Activated naive CD4-positive, alpha-beta T cell treated with anti-CD3 and anti-CD28 coated beads, Interleukin-2, amount 10 ng/mL, durations not matched to agents 7 days and 5 days (primary cell): ENCODE measurements at regions of chr4 and their contacts with region 1.

Region 1: GRCh38 chr4:10164877-10165283 is 48.3 kb upstream of the WDR1 start:
- DNase-seq: peak; percentile 35
- H3K4me3 Mint-ChIP-seq: no peak overlapping the region
- H3K27ac Mint-ChIP-seq: no peak overlapping the region
- H3K4me1 Mint-ChIP-seq: peaks cover 38% of the 10 kb centered on the region
- H3K27me3 Mint-ChIP-seq: peaks cover 8% of the 10 kb centered on the region

Region 2: DNA sequence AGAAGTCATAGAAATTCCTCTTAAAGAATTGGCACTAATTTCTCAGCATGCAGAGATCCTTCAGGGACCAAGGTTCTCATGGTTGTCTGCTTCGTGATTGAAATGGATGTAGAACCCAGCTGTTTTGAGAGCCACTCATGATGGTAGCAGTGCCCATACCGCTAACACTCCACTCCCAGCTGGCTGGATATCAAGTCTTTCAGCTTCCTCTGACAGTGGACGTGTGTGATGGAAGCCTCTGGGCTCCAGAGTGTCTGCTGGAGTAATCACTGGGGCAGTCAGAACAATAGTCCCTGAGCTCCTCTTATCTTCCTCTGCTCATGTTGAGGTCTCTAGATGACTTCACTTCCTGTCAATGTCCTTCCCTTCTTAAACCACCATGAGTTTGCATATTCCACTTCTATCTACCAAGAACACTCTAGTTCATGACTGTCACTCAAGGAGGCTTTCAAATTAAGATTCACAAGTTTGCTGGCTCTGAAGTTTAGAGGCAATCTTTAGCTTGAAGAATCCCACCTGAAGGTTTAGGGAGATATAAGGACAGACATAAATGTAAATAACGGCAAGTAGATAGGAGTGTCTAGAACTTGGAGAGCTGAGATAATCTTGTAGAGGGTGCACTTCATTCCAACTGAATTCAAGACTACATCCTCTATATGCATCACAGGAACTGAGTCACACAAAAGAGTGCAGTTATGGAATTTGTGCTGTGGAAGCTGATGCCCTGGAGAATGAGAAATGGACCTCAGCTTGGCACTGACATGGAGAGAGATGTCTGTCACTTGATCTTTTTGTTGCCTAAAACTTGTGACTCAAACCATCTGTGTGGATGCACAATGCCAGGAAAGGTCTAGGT is 16.3 kb after region 1 on chr4:
- CTCF ChIA-PET with region 1: interaction called, 32 read pairs
- DNase-seq: peak; percentile 46
- H3K4me3 Mint-ChIP-seq: no peak overlapping the region
- H3K27ac Mint-ChIP-seq: peak overlapping the region; percentile 87
- H3K4me1 Mint-ChIP-seq: peaks cover 47% of the 10 kb centered on the region
- H3K27me3 Mint-ChIP-seq: peaks cover 7% of the 10 kb centered on the region

Region 3: DNA sequence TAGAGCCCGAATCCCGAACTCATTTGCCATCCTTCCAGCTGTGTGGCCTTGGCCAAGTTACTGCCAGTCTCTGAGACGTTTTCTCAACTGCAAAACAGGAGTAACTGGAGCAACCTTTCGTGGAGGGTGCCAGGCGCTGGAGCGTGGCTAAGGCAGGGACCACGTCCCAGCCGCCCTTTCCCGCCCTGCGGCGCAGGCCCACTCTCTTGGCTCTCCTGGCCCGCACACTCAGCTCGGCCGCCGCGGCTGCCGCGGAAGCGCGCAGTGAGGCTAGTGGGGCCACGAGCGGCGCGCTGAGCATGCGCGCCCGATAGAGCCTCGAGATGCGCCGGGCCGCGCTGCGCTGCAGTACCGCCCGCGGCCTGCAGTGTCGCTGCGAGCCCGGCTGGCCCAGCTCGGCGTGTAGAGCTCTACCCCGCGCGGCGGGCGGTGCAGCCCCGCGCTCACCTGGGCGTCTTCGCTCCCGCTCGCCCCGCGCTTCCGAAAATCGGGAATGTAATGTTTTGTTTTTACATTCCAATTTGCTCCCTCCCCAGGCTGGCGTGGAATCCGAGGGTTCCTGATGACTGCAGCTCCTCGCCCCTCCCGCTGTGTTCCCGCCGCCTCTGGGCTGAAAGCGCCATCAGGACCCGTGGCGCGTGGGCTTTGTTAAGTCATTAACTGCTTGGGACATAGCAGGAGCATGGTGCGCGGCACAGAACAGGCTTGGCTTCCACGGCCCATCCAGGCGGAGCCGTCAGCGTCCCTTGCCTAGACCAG is 296.4 kb after region 1 on chr4:
- CTCF ChIA-PET with region 1: interaction called, 13 read pairs
- DNase-seq: peak; percentile 76
- H3K4me3 Mint-ChIP-seq: peak overlapping the region; percentile 65
- H3K27ac Mint-ChIP-seq: no peak overlapping the region
- H3K4me1 Mint-ChIP-seq: peaks cover 32% of the 10 kb centered on the region
- H3K27me3 Mint-ChIP-seq: peaks cover 50% of the 10 kb centered on the region

Region 4: GRCh38 chr4:10535912-10536311 is 371.0 kb after region 1 on chr4:
- CTCF ChIA-PET with region 1: interaction called, 81 read pairs
- DNase-seq: no peak
- H3K4me3 Mint-ChIP-seq: no peak overlapping the region
- H3K27ac Mint-ChIP-seq: no peak overlapping the region
- H3K4me1 Mint-ChIP-seq: no peaks in the 10 kb centered on the region
- H3K27me3 Mint-ChIP-seq: peaks cover 12% of the 10 kb centered on the region

Region 5: DNA sequence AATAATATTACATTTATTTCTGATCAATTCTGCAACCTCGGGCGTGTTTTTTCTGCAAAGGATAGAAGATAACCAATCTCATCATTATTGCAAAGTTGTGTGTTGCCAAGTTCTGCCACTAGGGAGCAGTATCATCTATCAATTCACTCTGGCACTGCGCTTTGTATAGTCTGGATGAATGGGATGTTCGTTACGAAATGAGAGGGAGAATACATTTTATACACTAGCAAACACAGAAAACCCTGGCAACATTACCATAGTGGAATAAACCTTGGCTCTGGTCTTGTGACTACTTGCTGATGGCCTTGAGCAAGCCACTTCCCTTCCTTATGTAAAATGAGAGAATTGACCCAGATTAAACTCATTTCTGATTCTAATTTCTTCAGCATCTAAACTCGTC is 389.8 kb after region 1 on chr4:
- CTCF ChIA-PET with region 1: interaction called, 85 read pairs
- DNase-seq: peak; percentile 65
- H3K4me3 Mint-ChIP-seq: no peak overlapping the region
- H3K27ac Mint-ChIP-seq: no peak overlapping the region
- H3K4me1 Mint-ChIP-seq: peaks cover 2% of the 10 kb centered on the region
- H3K27me3 Mint-ChIP-seq: peaks cover 9% of the 10 kb centered on the region